Caco-2 (cell line): ENCODE measurements at regions of chr20 and their contacts with region 1.

Region 1: DNA sequence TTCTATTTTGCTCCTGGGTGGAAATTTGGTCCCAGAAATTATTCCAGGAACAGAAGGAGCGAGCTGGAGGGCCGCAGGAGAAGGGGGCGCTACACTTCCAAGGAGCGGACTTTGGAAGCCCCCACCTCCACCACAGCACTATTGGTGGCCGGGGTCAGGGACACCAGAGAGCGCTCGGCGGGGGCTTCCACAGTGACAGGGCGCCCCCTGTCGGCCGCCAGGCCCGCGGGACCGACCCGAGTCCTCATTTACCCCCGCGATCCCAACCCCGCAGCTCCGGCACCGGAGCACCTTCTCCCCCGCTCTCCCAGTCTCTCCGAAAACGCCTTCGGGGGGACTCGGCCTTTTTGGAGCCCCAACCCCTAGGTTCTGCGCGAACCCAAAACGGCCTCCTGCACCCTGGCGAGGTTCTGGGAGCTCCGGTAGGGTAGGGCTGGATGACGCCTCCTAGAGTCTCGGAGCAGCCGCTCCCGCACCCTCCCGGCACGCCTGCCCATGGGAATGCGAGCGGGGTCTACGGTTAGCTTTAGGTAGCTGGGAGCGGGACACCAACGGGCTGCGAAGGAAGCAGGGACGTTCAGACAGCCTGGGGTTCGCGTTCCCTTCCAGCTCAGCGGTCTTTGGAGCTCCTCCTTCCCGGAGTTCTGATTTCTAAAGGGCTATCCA is 2.4 kb upstream of the FOXA2 start:
- DNase-seq: peak; percentile 62 to 72
- H3K4me3 ChIP-seq: no peak overlapping the region
- H3K4me3 Mint-ChIP-seq: no peak overlapping the region
- H3K27ac Mint-ChIP-seq: no peak overlapping the region
- H3K4me1 ChIP-seq: peaks cover 13% of the 10 kb centered on the region
- H3K4me1 Mint-ChIP-seq: peaks cover 7% of the 10 kb centered on the region
- H3K27me3 ChIP-seq: no peaks in the 10 kb centered on the region
- H3K27me3 Mint-ChIP-seq: peaks cover 6% of the 10 kb centered on the region
- CTCF ChIP-seq: peak; percentile 77 to 78

Region 2: GRCh38 chr20:21956591-21956990 is 630.2 kb before region 1 on chr20:
- CTCF ChIA-PET with region 1: no interaction called
- POLR2A ChIA-PET with region 1: no interaction called
- intact Hi-C with region 1: no loop called
- DNase-seq: no peak
- H3K4me3 ChIP-seq: no peak overlapping the region
- H3K4me3 Mint-ChIP-seq: no peak overlapping the region
- H3K27ac Mint-ChIP-seq: no peak overlapping the region
- H3K4me1 ChIP-seq: no peaks in the 10 kb centered on the region
- H3K4me1 Mint-ChIP-seq: no peaks in the 10 kb centered on the region
- H3K27me3 ChIP-seq: no peaks in the 10 kb centered on the region
- H3K27me3 Mint-ChIP-seq: peaks cover 8% of the 10 kb centered on the region
- CTCF ChIP-seq: no peak

Region 3: GRCh38 chr20:22403632-22404361 is 183.0 kb before region 1 on chr20:
- CTCF ChIA-PET with region 1: interaction called, 6 read pairs
- POLR2A ChIA-PET with region 1: interaction called, 17 read pairs
- intact Hi-C with region 1: no loop called
- DNase-seq: peak; percentile 53 to 60
- H3K4me3 ChIP-seq: peak overlapping the region; percentile 24
- H3K4me3 Mint-ChIP-seq: peak overlapping the region; percentile 72
- H3K27ac Mint-ChIP-seq: peak overlapping the region; percentile 39
- H3K4me1 ChIP-seq: peaks cover 15% of the 10 kb centered on the region
- H3K4me1 Mint-ChIP-seq: peaks cover 35% of the 10 kb centered on the region
- H3K27me3 ChIP-seq: no peaks in the 10 kb centered on the region
- H3K27me3 Mint-ChIP-seq: no peaks in the 10 kb centered on the region
- CTCF ChIP-seq: no peak

Region 4: GRCh38 chr20:22453239-22454080 is 133.3 kb before region 1 on chr20:
- CTCF ChIA-PET with region 1: interaction called, 19 read pairs
- POLR2A ChIA-PET with region 1: interaction called, 8 read pairs
- intact Hi-C with region 1: loop called (anchors 1 kb)
- DNase-seq: peak; percentile 58 to 67
- H3K4me3 ChIP-seq: no peak overlapping the region
- H3K4me3 Mint-ChIP-seq: no peak overlapping the region
- H3K27ac Mint-ChIP-seq: no peak overlapping the region
- H3K4me1 ChIP-seq: no peaks in the 10 kb centered on the region
- H3K4me1 Mint-ChIP-seq: peaks cover 7% of the 10 kb centered on the region
- H3K27me3 ChIP-seq: no peaks in the 10 kb centered on the region; the same call in 1 of the 2 replicates
- H3K27me3 Mint-ChIP-seq: peaks cover 10% of the 10 kb centered on the region
- CTCF ChIP-seq: peak; percentile 80 to 89

Region 5: DNA sequence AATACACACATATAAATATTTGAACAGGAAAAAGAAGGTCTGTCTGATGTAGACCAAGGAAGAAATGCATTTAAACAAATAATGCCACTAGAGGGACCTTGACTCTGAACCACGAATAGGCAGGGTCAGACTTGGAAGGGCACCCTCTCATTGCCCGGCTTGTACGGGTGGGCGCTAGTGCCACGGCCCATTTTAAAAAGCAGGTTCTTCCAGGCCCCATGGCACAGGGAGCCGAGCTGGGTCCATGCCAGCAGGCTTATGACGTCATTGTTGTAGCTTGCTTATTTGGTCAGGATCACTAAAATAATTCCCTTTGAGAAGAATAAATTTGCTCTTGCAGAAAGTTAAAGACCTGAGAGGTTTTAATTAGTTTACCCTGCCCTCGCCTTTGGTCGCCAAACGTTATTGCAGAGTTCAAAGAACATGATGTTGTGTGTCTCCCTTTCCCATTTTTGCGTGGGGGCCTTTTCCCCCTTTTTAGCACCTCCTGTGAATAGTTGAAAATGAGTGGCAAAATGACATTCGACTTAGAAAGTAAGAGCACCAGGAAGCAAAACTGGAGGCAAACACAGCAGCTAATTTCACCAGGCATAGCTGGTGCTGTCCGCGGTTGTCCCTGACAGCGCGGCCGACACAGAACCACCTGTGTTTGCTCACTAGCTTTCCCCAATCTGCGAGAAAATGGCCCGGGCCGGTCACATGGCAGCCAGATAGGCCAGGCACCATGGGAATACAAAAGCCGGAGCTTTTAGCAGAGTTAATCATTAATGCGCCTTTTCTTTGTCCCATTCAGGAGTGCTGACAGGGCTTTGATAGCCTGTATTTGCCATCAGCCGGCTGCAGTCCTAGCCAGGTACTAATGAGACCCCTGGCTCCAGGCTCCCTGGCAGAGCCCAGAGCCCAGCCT is 96.2 kb before region 1 on chr20:
- CTCF ChIA-PET with region 1: interaction called, 15 read pairs
- POLR2A ChIA-PET with region 1: interaction called, 38 read pairs
- intact Hi-C with region 1: loop called (anchors 1 kb)
- DNase-seq: peak; percentile 98
- H3K4me3 ChIP-seq: peak overlapping the region; percentile 11
- H3K4me3 Mint-ChIP-seq: peak overlapping the region; percentile 68
- H3K27ac Mint-ChIP-seq: peak overlapping the region; percentile 98
- H3K4me1 ChIP-seq: peaks cover 32% of the 10 kb centered on the region
- H3K4me1 Mint-ChIP-seq: peaks cover 30% of the 10 kb centered on the region
- H3K27me3 ChIP-seq: no peaks in the 10 kb centered on the region
- H3K27me3 Mint-ChIP-seq: no peaks in the 10 kb centered on the region
- CTCF ChIP-seq: peak; percentile 11 to 30

Region 6: DNA sequence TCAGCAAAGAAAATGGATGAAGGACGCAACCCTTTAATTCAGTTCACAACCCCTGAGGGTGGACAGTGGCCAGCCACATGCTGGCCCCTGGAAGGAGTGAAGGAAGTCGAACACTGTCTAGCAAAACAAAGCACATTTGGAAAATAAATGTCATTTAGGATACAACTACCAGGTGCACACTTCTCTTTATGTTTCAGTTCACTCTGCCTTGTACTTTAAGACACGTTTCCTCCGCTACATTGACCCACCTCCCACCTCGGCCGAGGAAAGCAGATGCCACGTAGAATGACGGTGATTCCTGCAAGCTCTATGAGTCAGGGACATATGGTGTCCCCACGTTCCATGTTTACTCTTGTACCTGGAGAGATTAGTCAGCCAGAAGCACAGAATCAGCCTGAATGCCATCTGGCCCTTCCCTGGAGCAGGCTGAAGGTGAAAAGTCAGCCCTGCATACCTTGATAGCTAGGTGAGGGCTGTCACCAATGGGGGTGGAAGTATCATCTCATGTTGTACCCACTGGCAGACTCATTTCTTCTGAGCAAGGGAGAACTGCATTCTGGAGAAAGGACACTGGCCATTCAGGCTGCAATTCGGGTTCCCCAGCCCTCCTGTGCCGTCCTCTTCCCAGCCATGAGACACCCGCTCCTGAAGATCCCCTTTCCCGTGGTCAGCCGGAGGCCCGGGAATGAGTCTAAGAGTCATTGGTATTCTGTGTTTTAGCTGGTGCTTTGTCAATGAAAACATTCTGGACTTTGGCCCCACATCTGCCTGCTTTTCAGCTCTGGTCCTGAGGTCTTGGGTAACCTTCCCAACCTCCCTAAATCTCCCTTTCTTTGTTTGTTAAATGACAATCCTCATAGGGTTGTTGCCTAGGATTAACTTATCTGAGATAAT is 63.0 kb before region 1 on chr20:
- CTCF ChIA-PET with region 1: interaction called, 4 read pairs
- POLR2A ChIA-PET with region 1: interaction called, 21 read pairs
- intact Hi-C with region 1: loop called (anchors 1 kb)
- DNase-seq: peak; percentile 90 to 92
- H3K4me3 ChIP-seq: peak overlapping the region; percentile 26
- H3K4me3 Mint-ChIP-seq: peak overlapping the region; percentile 82
- H3K27ac Mint-ChIP-seq: peak overlapping the region; percentile 99
- H3K4me1 ChIP-seq: peaks cover 41% of the 10 kb centered on the region
- H3K4me1 Mint-ChIP-seq: peaks cover 40% of the 10 kb centered on the region
- H3K27me3 ChIP-seq: no peaks in the 10 kb centered on the region
- H3K27me3 Mint-ChIP-seq: no peaks in the 10 kb centered on the region
- CTCF ChIP-seq: no peak

Region 7: DNA sequence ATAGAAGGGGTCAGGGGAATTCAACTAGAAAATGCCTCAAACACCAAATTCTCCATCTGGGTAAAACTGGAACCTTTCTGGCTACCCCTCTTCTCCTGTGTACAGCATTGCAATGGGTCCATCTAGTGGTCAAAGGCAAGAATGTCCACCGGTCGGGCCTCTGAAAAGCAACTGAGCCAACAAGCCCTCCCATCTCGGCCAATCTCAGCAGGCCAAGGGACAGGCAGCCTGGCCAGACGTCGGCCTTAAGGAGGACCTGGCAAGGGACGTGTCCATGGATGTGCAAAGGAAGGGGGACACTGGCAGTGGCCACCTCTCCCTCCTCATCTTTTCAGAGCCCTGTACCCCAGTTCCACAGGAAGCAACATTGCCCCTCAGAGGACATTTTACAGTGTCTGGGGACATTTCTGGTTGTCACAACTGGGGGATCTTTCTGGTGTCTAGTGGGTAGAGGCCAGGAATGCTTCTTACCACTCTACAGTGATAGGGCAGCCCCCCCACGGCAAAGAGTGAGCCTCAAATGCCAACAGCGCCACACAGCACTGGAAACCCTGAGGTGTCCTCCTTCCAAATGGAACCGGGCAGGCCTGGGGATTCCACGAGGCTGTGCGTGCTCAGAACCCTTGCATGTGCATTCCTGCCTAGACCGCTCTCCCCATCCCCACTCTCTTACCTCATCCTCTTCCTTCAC is 97.4 kb after region 1 on chr20:
- CTCF ChIA-PET with region 1: interaction called, 4 read pairs
- POLR2A ChIA-PET with region 1: interaction called, 4 read pairs
- intact Hi-C with region 1: loop called (anchors 1 kb)
- DNase-seq: peak; percentile 81 to 86
- H3K4me3 ChIP-seq: no peak overlapping the region
- H3K4me3 Mint-ChIP-seq: no peak overlapping the region
- H3K27ac Mint-ChIP-seq: peak overlapping the region; percentile 32
- H3K4me1 ChIP-seq: peaks cover 23% of the 10 kb centered on the region
- H3K4me1 Mint-ChIP-seq: peaks cover 20% of the 10 kb centered on the region
- H3K27me3 ChIP-seq: no peaks in the 10 kb centered on the region
- H3K27me3 Mint-ChIP-seq: no peaks in the 10 kb centered on the region
- CTCF ChIP-seq: peak; percentile 89